Aorta (tissue), 5 donors: ENCODE measurements at regions of chr4 and their contacts with region 1.

Region 1: GRCh38 chr4:145320294-145320693 is 139.9 kb upstream of the OTUD4 start:
- DNase-seq: no peak
- ATAC-seq: no peak
- H3K4me3 ChIP-seq: no peak overlapping the region
- H3K27ac ChIP-seq: no peak overlapping the region
- H3K4me1 ChIP-seq: no peaks in the 10 kb centered on the region
- H3K27me3 ChIP-seq: no peaks in the 10 kb centered on the region

Region 2: DNA sequence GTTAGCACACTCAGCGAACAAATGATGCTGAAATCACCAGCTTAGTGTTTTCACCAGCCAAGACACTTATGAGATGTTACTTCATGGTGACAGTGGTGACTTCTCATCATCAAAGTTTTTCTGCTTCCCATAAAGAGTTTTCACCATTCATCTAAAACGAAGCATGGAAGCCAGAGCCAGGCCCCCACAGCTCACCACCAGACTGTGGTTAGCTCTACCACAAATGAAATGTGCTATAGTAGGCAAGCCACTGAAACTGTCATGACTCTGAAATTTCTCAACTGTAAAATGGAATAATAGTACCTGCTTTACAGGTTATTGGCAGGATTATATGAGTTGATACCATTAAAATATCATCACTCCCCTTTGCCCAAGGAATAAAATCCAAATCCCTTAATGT is 730.8 kb before region 1 on chr4:
- intact Hi-C with region 1: loop called in 1 of 2 experiments (anchors 5 kb)
- DNase-seq: no peak
- ATAC-seq: no peak
- H3K4me3 ChIP-seq: no peak overlapping the region
- H3K27ac ChIP-seq: no peak overlapping the region
- H3K4me1 ChIP-seq: no peaks in the 10 kb centered on the region
- H3K27me3 ChIP-seq: no peaks in the 10 kb centered on the region

Region 3: GRCh38 chr4:145266881-145267280 is 53.4 kb before region 1 on chr4:
- intact Hi-C with region 1: no loop called
- DNase-seq: no peak
- ATAC-seq: no peak
- H3K4me3 ChIP-seq: no peak overlapping the region
- H3K27ac ChIP-seq: no peak overlapping the region
- H3K4me1 ChIP-seq: no peaks in the 10 kb centered on the region
- H3K27me3 ChIP-seq: no peaks in the 10 kb centered on the region